Left cardiac atrium (tissue), 4 donors: ENCODE measurements at regions of chr17 and their contacts with region 1.

Region 1: GRCh38 chr17:75764711-75765421 is at the start of gene GALK1:
- DNase-seq: peak; percentile 86
- ATAC-seq: peak; percentile 93
- total RNA-seq, gene GALK1: 22.0 to 22.9 TPM

Region 2: GRCh38 chr17:75667021-75667790 is 97.7 kb before region 1 on chr17 and contains the starts of genes RECQL5 and SAP30BP:
- intact Hi-C with region 1: no loop called
- DNase-seq: peak; percentile 99
- ATAC-seq: peak; percentile 100
- total RNA-seq, gene RECQL5: 11.3 to 15.5 TPM
- total RNA-seq, gene SAP30BP: 47.2 to 59.6 TPM

Region 3: GRCh38 chr17:75731716-75732498 is 33.0 kb before region 1 on chr17:
- intact Hi-C with region 1: no loop called
- DNase-seq: no peak
- ATAC-seq: no peak

Region 4: GRCh38 chr17:75896415-75897159 is 131.7 kb after region 1 on chr17 and contains the start of gene TRIM65:
- intact Hi-C with region 1: loop called in 1 of 2 experiments (anchors 10 kb)
- DNase-seq: peak; percentile 92
- ATAC-seq: peak; percentile 85 to 91
- total RNA-seq, gene TRIM65: 8.4 to 9.9 TPM